ENCODE measurements at regions of chr14 and their contacts with region 1.

Region 1: GRCh38 chr14:70707138-70708038 is 65.7 kb downstream of the TTC9 start:
- DNase-seq: peak; percentile 33
- ATAC-seq: peak; percentile 36
- H3K4me3 Mint-ChIP-seq: no peak overlapping the region
- H3K27ac Mint-ChIP-seq: peak overlapping the region; percentile 47
- H3K4me1 Mint-ChIP-seq: peaks cover 56% of the 10 kb centered on the region
- H3K27me3 Mint-ChIP-seq: no peaks in the 10 kb centered on the region
- CTCF ChIP-seq: no peak

Region 2: GRCh38 chr14:70622111-70622712 is 85.2 kb before region 1 on chr14:
- CTCF ChIA-PET with region 1: interaction called, 15 read pairs
- POLR2A ChIA-PET with region 1: no interaction called
- DNase-seq: peak; percentile 66
- ATAC-seq: peak; percentile 100
- H3K4me3 Mint-ChIP-seq: no peak overlapping the region
- H3K27ac Mint-ChIP-seq: no peak overlapping the region
- H3K4me1 Mint-ChIP-seq: no peaks in the 10 kb centered on the region
- H3K27me3 Mint-ChIP-seq: no peaks in the 10 kb centered on the region
- CTCF ChIP-seq: peak; percentile 46; the same call in 1 of the 2 replicates

Region 3: GRCh38 chr14:70640938-70641547 is 66.3 kb before region 1 on chr14:
- CTCF ChIA-PET with region 1: interaction called, 10 read pairs
- POLR2A ChIA-PET with region 1: interaction called, 5 read pairs
- DNase-seq: no peak
- ATAC-seq: peak; percentile 47
- H3K4me3 Mint-ChIP-seq: peak overlapping the region; percentile 92
- H3K27ac Mint-ChIP-seq: peak overlapping the region; percentile 80
- H3K4me1 Mint-ChIP-seq: peaks cover 44% of the 10 kb centered on the region
- H3K27me3 Mint-ChIP-seq: no peaks in the 10 kb centered on the region
- CTCF ChIP-seq: no peak

Region 4: DNA sequence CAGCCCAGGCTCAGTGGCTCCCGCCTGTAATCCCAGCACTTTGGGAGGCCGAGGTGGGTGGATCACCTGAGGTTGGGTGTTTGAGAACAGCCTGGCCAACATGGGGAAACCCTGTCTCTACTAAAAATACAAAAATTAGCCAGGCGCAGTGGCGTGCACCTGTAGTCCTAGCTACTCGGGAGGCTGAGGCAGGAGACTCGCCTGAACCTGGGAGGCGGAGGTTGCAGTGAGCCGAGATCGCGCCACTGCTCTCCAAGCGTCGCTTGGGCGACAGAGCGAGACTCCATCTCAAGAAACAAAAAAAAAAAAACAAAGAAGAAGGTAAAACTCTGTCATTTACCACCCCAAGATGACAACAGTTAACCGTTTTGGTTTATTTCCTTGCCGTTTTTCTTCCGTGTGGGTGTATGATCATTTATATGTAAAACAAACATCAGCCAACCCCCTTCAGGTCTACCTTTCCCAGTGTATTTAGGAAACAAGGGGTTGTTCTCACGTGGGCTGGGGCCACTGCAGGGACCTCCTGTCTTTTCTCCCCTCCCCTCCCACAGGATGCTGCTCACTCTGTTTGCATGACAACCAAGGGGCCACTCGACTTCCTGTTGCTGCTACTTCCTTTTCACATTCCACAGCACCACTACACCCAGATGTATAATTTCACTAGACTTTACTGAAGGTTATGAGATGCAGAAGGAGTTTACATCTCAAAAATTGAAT is 52.1 kb before region 1 on chr14:
- CTCF ChIA-PET with region 1: interaction called, 11 read pairs
- POLR2A ChIA-PET with region 1: no interaction called
- DNase-seq: peak; percentile 59
- ATAC-seq: peak; percentile 85
- H3K4me3 Mint-ChIP-seq: peak overlapping the region; percentile 41
- H3K27ac Mint-ChIP-seq: peak overlapping the region; percentile 94
- H3K4me1 Mint-ChIP-seq: peaks cover 92% of the 10 kb centered on the region
- H3K27me3 Mint-ChIP-seq: no peaks in the 10 kb centered on the region
- CTCF ChIP-seq: no peak

Region 5: DNA sequence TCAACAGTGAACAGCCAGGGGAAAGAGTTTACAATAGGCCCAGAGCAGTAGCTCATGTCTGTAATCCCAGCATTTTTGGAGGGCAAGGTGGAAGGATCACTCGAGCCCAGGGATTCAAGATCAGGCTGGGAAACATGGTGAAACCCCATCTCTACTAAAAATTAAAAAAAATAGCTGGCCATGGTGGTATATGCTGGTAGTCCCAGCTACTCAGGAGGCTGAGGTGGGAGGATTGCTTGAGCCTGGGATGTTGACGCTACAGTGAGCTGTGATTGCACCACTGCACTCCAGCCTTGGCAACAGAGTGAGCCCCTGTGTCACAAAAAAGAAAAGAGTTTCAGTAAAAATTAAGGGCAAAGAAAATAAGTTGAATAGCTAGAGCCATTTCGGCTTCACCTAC is 17.7 kb before region 1 on chr14:
- CTCF ChIA-PET with region 1: interaction called, 13 read pairs
- POLR2A ChIA-PET with region 1: interaction called, 3 read pairs
- DNase-seq: no peak
- ATAC-seq: no peak
- H3K4me3 Mint-ChIP-seq: no peak overlapping the region
- H3K27ac Mint-ChIP-seq: no peak overlapping the region
- H3K4me1 Mint-ChIP-seq: peaks cover 41% of the 10 kb centered on the region
- H3K27me3 Mint-ChIP-seq: no peaks in the 10 kb centered on the region
- CTCF ChIP-seq: no peak

Measured in WTC11 (cell line).